CD4-positive, alpha-beta memory T cell (primary cell): ENCODE measurements at regions of chr3 and their contacts with region 1.

Region 1: GRCh38 chr3:88113311-88114162 is 36.2 kb upstream of the C3orf38 start:
- DNase-seq: peak; percentile 60 to 72 (median 66)
- H3K4me3 ChIP-seq: no peak overlapping the region
- H3K4me3 Mint-ChIP-seq: no peak overlapping the region
- H3K27ac ChIP-seq: no peak overlapping the region
- H3K27ac Mint-ChIP-seq: peak overlapping the region in 5 of 7 donors; percentile 1 to 75 (median 55)
- H3K4me1 ChIP-seq: no peaks in the 10 kb centered on the region
- H3K4me1 Mint-ChIP-seq: peaks cover 7 to 18% (median 16%) of the 10 kb centered on the region in 4 donors
- H3K27me3 ChIP-seq: no peaks in the 10 kb centered on the region
- H3K27me3 Mint-ChIP-seq: no peaks in the 10 kb centered on the region

Region 2: GRCh38 chr3:87298111-87298718 is 815.3 kb before region 1 on chr3:
- CTCF ChIA-PET with region 1: interaction called, 5 read pairs
- POLR2A ChIA-PET with region 1: no interaction called
- intact Hi-C with region 1: loop called (anchors 1 kb)
- DNase-seq: peak in 4 of 5 donors; percentile 25 to 36 (median 31)
- H3K4me3 ChIP-seq: no peak overlapping the region
- H3K4me3 Mint-ChIP-seq: no peak overlapping the region
- H3K27ac ChIP-seq: no peak overlapping the region
- H3K27ac Mint-ChIP-seq: no peak overlapping the region
- H3K4me1 ChIP-seq: no peaks in the 10 kb centered on the region
- H3K4me1 Mint-ChIP-seq: peaks cover 0 to 2% (median 0%) of the 10 kb centered on the region in 4 donors
- H3K27me3 ChIP-seq: no peaks in the 10 kb centered on the region
- H3K27me3 Mint-ChIP-seq: peaks cover 0 to 3% of the 10 kb centered on the region in 2 donors

Region 3: DNA sequence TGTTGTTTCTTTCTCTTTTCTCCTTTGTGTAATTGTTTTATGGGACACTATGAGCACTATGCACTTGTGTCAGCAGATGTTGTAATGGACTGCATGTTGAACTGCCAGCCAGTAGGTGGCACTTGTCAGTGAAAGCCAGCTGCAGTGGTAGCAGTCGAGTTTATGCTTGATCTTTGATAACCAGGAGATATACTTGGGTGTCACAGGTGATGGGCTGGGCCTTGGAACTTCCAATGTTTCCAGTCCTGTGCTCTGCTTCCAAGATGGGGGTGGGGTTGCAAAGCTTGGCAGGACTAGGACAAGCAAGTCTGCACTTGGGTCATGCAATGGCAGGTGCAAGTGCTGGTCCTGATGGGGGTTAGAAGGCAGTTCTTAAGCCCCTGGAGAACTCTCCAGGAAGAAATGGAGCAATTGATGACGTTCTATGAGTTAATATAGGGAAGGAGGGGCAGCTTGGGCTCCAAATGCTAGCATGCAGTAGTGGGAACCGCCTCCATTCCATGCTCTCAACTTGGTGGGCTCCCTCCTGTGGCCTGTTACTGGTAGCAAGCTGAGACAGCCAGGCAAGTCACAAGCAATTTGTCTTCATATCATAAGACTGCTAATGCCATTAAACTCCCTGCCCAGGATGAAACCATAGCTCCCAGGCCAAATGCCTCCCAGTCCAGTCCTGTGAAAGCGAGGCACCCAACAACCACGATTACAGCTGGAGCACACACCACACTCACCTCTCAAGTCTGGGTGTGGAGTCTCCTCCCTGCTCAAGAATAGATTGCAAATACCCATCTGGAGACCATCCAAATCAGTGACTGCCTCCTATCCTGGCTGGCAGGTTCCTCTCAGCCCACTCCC is 342.0 kb before region 1 on chr3:
- CTCF ChIA-PET with region 1: interaction called, 17 read pairs
- POLR2A ChIA-PET with region 1: no interaction called
- intact Hi-C with region 1: no loop called
- DNase-seq: peak; percentile 27 to 39 (median 32)
- H3K4me3 ChIP-seq: no peak overlapping the region
- H3K4me3 Mint-ChIP-seq: no peak overlapping the region
- H3K27ac ChIP-seq: no peak overlapping the region
- H3K27ac Mint-ChIP-seq: no peak overlapping the region
- H3K4me1 ChIP-seq: no peaks in the 10 kb centered on the region
- H3K4me1 Mint-ChIP-seq: peaks cover 0 to 2% (median 0%) of the 10 kb centered on the region in 4 donors
- H3K27me3 ChIP-seq: no peaks in the 10 kb centered on the region
- H3K27me3 Mint-ChIP-seq: peaks cover 4 to 16% of the 10 kb centered on the region in 2 donors

Region 4: GRCh38 chr3:87969620-87970019 is 143.9 kb before region 1 on chr3:
- CTCF ChIA-PET with region 1: no interaction called
- POLR2A ChIA-PET with region 1: no interaction called
- intact Hi-C with region 1: no loop called
- DNase-seq: no peak
- H3K4me3 ChIP-seq: no peak overlapping the region
- H3K4me3 Mint-ChIP-seq: no peak overlapping the region
- H3K27ac ChIP-seq: no peak overlapping the region
- H3K27ac Mint-ChIP-seq: no peak overlapping the region
- H3K4me1 ChIP-seq: no peaks in the 10 kb centered on the region
- H3K4me1 Mint-ChIP-seq: no peaks in the 10 kb centered on the region
- H3K27me3 ChIP-seq: no peaks in the 10 kb centered on the region
- H3K27me3 Mint-ChIP-seq: peaks cover 5 to 15% of the 10 kb centered on the region in 2 donors

Region 5: GRCh38 chr3:88003115-88003755 is 110.3 kb before region 1 on chr3:
- CTCF ChIA-PET with region 1: interaction called, 13 read pairs
- POLR2A ChIA-PET with region 1: no interaction called
- intact Hi-C with region 1: loop called (anchors 1 kb)
- DNase-seq: peak in 2 of 5 donors; percentile 28 to 32
- H3K4me3 ChIP-seq: no peak overlapping the region
- H3K4me3 Mint-ChIP-seq: no peak overlapping the region
- H3K27ac ChIP-seq: no peak overlapping the region
- H3K27ac Mint-ChIP-seq: no peak overlapping the region
- H3K4me1 ChIP-seq: peaks cover 5% of the 10 kb centered on the region
- H3K4me1 Mint-ChIP-seq: peaks cover 0 to 10% (median 7%) of the 10 kb centered on the region in 4 donors
- H3K27me3 ChIP-seq: no peaks in the 10 kb centered on the region
- H3K27me3 Mint-ChIP-seq: no peaks in the 10 kb centered on the region

Region 6: GRCh38 chr3:88101142-88101541 is 12.4 kb before region 1 on chr3:
- CTCF ChIA-PET with region 1: interaction called, 12 read pairs
- POLR2A ChIA-PET with region 1: no interaction called
- intact Hi-C with region 1: no loop called
- DNase-seq: no peak
- H3K4me3 ChIP-seq: no peak overlapping the region
- H3K4me3 Mint-ChIP-seq: no peak overlapping the region
- H3K27ac ChIP-seq: no peak overlapping the region
- H3K27ac Mint-ChIP-seq: peak overlapping the region in 2 of 7 donors; percentile 10 to 25
- H3K4me1 ChIP-seq: no peaks in the 10 kb centered on the region
- H3K4me1 Mint-ChIP-seq: peaks cover 18 to 43% (median 23%) of the 10 kb centered on the region in 4 donors
- H3K27me3 ChIP-seq: no peaks in the 10 kb centered on the region
- H3K27me3 Mint-ChIP-seq: no peaks in the 10 kb centered on the region

Region 7: GRCh38 chr3:88149509-88150362 is 36.2 kb after region 1 on chr3 and contains the start of gene C3orf38:
- CTCF ChIA-PET with region 1: interaction called, 6 read pairs
- POLR2A ChIA-PET with region 1: interaction called, 5 read pairs
- intact Hi-C with region 1: loop called (anchors 2 kb)
- DNase-seq: peak; percentile 83 to 86 (median 85)
- H3K4me3 ChIP-seq: peak within 1 kb of the TSS; percentile 96 to 99
- H3K4me3 Mint-ChIP-seq: peak within 1 kb of the TSS; percentile 96 to 99 (median 98)
- H3K27ac ChIP-seq: peak within 1 kb of the TSS; percentile 90
- H3K27ac Mint-ChIP-seq: peak within 1 kb of the TSS; percentile 95 to 99 (median 98)
- H3K4me1 ChIP-seq: peaks cover 36% of the 10 kb centered on the region
- H3K4me1 Mint-ChIP-seq: peaks cover 15 to 43% (median 26%) of the 10 kb centered on the region in 4 donors
- H3K27me3 ChIP-seq: no peaks in the 10 kb centered on the region
- H3K27me3 Mint-ChIP-seq: no peaks in the 10 kb centered on the region
- total RNA-seq, gene C3orf38: 36.5 to 38.5 TPM